ENCODE measurements at regions of chr5 and their contacts with region 1.

Region 1: GRCh38 chr5:66742083-66742895 is 146.1 kb downstream of the MAST4 start:
- DNase-seq: peak; percentile 74

Region 2: GRCh38 chr5:66171349-66172344 is 570.6 kb before region 1 on chr5:
- intact Hi-C with region 1: loop called (anchors 10 kb)
- DNase-seq: no peak

Region 3: GRCh38 chr5:66306105-66306843 is 436.0 kb before region 1 on chr5:
- intact Hi-C with region 1: no loop called
- DNase-seq: no peak

Region 4: DNA sequence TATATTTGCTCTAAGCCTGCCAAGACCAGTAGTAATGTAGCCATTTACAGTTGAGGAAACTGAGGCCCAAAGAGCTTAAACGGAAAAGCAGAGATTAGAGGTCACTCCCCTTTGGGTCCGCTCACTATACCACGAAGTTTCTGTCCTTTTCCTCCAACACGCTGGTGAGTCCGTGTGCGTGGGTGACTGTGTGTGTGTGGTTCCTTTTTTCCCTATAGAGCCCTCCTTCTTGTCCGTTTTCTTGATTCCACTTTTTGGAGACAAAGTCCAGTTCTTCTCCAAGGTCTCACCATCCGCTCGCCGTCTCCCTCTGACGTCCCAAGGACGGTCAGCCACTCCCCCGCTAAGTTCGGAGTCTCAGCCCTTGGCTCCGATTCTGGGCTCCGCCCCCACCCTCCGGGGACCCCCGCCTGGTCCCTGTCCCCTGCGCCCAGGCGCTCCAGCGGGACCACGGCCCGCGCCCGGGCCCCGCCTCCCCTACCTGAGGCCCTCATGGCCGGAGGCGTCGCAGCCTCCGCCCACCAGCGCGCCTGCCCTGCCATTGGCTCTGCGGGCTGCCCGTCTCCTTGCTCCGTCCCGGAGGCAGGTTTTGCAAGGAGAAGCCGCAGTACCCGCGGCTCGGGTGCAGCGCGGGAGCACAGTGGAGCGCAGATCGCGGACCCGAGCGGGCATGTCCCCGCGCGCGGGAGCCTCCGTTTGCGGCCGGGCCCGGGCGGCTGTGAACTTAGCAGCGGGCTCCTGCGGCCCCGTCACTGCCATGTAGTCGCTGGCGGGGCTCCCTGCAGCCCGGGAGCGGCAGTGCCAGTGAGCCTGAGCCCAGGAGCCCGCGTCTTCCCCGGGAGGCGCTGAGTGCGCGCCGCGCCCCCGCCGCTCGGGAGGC is 146.3 kb before region 1 on chr5 and contains the start of gene MAST4:
- intact Hi-C with region 1: loop called (anchors 5 kb)
- DNase-seq: peak; percentile 94
- total RNA-seq, gene MAST4: 91.4 TPM

Measured in cardiac septum (tissue), 1 donor.